Prostate gland (tissue), 2 donors: ENCODE measurements at regions of chr6 and their contacts with region 1.

Region 1: DNA sequence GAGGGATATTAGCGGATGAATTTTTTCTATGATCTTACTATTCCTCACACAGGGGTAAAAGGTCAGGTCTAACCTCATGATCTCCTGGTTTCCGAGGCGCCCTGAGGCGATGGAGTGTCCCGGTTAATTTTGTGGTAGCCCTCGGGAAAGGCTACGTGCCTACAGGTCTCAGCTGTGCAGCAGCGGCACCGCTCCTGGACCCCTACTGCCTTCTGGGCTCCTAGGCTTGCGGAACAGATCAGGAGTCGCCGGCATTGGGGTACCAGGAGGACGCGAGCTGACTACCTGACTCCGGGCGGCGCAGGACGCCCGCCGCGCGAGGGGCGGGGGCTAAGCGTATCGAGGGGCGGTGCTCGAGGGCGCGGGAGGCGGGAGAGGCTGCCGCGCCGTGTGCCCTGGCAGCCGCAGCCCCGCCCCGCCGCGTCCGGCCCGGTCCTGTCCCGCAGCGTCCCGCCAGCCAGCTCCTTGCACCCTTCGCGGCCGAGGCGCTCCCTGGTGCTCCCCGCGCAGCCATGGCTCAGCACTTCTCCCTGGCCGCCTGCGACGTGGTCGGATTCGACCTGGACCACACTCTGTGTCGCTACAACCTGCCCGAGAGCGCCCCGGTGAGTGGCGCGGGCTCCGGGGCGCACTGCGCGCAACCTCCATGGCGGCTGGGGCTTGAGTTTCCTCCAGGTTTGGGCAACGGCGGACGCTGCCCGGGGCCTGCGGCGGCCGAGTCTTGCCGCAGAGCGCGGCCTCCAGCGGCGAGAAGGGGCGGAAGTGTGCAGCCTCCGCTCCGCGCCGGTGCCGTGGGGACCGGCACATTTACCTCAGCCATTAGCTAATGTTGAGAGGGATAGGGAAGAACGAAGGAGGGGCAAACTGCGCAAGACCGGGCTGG is at the start of gene NT5DC1:
- DNase-seq: peak; percentile 87
- H3K4me3 ChIP-seq: peak within 1 kb of the TSS; percentile 84 to 86
- H3K27ac ChIP-seq: peak within 1 kb of the TSS; percentile 95 to 98
- H3K4me1 ChIP-seq: peaks cover 3% of the 10 kb centered on the region
- H3K27me3 ChIP-seq: no peaks in the 10 kb centered on the region
- CTCF ChIP-seq: peak in 1 of 4 experiments; percentile 30
- POLR2A ChIP-seq: peak; percentile 77
- total RNA-seq, gene NT5DC1: 12.3 to 26.1 TPM

Region 2: GRCh38 chr6:115811541-115811940 is 289.1 kb before region 1 on chr6:
- intact Hi-C with region 1: no loop called
- DNase-seq: no peak
- H3K4me3 ChIP-seq: no peak overlapping the region
- H3K27ac ChIP-seq: no peak overlapping the region
- H3K4me1 ChIP-seq: no peaks in the 10 kb centered on the region
- H3K27me3 ChIP-seq: no peaks in the 10 kb centered on the region
- CTCF ChIP-seq: no peak
- POLR2A ChIP-seq: no peak

Region 3: DNA sequence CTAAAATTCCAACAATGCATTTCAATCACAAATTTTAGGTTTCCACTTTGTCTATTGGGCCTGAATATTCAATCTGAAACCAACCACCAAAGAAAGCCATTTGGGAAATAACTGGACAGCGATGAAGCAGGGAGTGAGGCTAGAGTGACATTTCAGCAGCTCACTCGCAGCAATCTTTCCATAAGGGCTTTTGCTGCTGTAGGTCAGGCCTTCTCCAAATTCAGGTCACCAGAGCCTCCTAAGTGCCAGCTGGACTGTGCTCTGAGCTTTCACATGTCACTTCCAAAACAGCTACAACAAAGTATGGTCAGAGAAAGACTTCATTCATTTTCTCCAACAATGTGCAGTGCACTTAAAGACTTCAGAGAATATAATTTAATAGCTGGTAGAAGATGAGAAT is 234.7 kb before region 1 on chr6:
- intact Hi-C with region 1: no loop called
- DNase-seq: no peak
- H3K4me3 ChIP-seq: no peak overlapping the region
- H3K27ac ChIP-seq: no peak overlapping the region
- H3K4me1 ChIP-seq: no peaks in the 10 kb centered on the region
- H3K27me3 ChIP-seq: no peaks in the 10 kb centered on the region
- CTCF ChIP-seq: no peak
- POLR2A ChIP-seq: no peak

Region 4: GRCh38 chr6:116010790-116011401 is 89.8 kb before region 1 on chr6:
- intact Hi-C with region 1: loop called (anchors 2 kb)
- DNase-seq: peak; percentile 74
- H3K4me3 ChIP-seq: no peak overlapping the region
- H3K27ac ChIP-seq: no peak overlapping the region
- H3K4me1 ChIP-seq: no peaks in the 10 kb centered on the region
- H3K27me3 ChIP-seq: no peaks in the 10 kb centered on the region
- CTCF ChIP-seq: peak; percentile 72 to 89 (median 84)
- POLR2A ChIP-seq: no peak

Region 5: DNA sequence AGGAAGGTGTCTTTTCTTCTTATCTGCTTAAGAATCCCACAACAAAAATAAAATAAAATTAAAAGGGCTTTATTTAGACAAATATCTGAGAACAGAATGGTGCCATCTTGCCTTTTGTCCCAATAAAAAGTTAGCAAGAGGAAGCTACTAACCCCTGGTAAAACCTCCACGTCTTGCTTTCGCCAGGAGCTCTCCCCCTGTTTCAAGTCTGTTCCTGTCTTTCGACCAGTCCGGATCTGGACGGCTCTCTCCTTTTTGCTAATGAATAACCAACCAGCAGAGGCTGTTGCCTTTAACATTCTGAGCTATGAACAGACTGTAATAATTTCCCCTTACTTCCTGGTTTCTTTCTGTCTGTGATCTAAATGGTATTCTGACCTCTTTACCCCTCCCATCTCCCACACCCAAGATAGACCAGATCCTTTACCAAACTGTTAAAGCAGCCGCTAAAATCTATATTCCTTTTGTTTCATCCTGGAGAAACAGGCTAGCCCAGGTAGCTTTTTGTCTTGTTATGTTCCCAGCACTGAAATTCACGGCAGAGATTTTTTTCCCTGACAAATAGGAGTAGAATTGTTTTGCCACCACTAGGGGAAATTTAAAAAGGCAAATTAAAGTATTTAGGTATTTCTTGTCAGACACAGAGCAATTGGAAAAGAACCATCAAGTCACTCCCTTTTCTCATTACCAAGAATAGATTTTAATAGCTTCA is 39.9 kb before region 1 on chr6 and contains the start of gene FRK:
- intact Hi-C with region 1: loop called (anchors 5 kb)
- DNase-seq: peak; percentile 76
- H3K4me3 ChIP-seq: peak within 1 kb of the TSS; percentile 39 to 40
- H3K27ac ChIP-seq: peak within 1 kb of the TSS; percentile 76 to 89
- H3K4me1 ChIP-seq: no peaks in the 10 kb centered on the region
- H3K27me3 ChIP-seq: no peaks in the 10 kb centered on the region
- CTCF ChIP-seq: peak in 3 of 4 experiments; percentile 51 to 59 (median 53)
- POLR2A ChIP-seq: peak; percentile 31
- total RNA-seq, gene FRK: 3.2 to 6.9 TPM